K562 (cell line): ENCODE measurements at regions of chr10 and their contacts with region 1.

Region 1: GRCh38 chr10:13219685-13220670 is 14.2 kb downstream of the UCMA start:
- DNase-seq: peak; percentile 44 to 76 (median 63)
- ATAC-seq: peak; percentile 96
- H3K4me3 ChIP-seq: no peak overlapping the region
- H3K27ac ChIP-seq: no peak overlapping the region
- H3K4me1 ChIP-seq: no peaks in the 10 kb centered on the region; a peak in 2 of 5 replicates
- H3K27me3 ChIP-seq: no peaks in the 10 kb centered on the region
- CTCF ChIP-seq: peak; percentile 66 to 75 (median 70)
- EP300 ChIP-seq: no peak
- POLR2A ChIP-seq: no peak
- RAD21 ChIP-seq: peak; percentile 49 to 75

Region 2: DNA sequence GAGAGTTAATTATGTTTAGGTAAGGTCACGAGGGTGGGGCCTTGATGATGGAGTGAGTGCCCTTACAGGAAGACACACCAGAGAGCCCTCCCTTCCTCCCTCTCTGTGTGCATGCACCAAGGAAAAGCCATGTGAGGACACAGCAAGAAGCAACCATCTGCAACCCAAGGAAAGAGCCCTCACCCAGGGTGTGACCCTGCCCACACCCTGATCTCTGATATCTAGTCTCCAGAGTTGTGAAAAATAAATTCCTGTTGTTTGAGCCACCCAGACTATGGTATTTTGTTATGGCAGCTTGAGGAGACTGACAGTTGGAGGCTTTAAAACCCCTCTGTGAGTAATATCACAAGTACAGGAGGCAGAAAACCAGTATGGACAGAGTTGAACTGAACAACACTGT is 73.6 kb before region 1 on chr10:
- CTCF ChIA-PET with region 1: no interaction called
- POLR2A ChIA-PET with region 1: no interaction called
- in situ Hi-C with region 1: no loop called
- intact Hi-C with region 1: no loop called
- DNase-seq: no peak
- ATAC-seq: peak; percentile 42; the same call in 2 of the 3 replicates
- H3K4me3 ChIP-seq: no peak overlapping the region
- H3K27ac ChIP-seq: no peak overlapping the region
- H3K4me1 ChIP-seq: peaks cover 0 to 2% of the 10 kb centered on the region in 2 experiments; a peak in 3 of 5 replicates
- H3K27me3 ChIP-seq: peaks cover 0 to 2% of the 10 kb centered on the region in 2 experiments; a peak in 1 of 5 replicates
- CTCF ChIP-seq: no peak
- EP300 ChIP-seq: no peak
- POLR2A ChIP-seq: no peak
- RAD21 ChIP-seq: no peak

Region 3: DNA sequence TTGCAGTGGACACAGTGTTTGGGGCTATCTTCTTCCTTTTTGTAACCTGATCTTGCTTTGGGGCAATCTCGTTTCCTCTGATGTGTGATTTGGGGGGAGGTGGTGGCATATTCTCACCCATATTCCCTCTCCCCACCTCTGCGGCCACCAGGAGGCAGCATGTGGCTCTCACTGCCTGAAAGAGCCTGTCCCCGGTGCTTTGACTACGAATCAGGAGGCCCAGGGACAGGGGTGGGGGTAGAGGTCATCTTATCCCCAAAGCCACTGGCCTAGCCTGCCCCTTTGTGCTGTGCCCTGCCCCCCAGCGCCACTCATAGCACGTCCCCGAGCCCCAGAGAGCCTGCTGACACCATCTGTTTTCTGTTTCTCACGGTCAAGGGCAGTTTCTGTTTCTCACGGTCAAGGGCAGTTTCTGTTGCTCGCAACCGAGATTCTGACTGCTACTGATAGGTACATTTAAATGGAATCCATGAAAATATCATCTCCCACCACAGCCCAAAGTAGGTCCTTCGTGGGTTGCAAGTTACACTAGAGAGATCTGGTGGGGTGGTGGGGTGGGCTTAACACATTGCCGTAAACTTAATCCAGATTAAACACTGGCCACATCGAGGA is 51.7 kb after region 1 on chr10:
- CTCF ChIA-PET with region 1: no interaction called
- POLR2A ChIA-PET with region 1: no interaction called
- in situ Hi-C with region 1: no loop called
- intact Hi-C with region 1: loop called (anchors 10 kb)
- DNase-seq: peak; percentile 78 to 89 (median 84)
- ATAC-seq: peak; percentile 98
- H3K4me3 ChIP-seq: no peak overlapping the region
- H3K27ac ChIP-seq: peak overlapping the region; percentile 62
- H3K4me1 ChIP-seq: peaks cover 21 to 24% of the 10 kb centered on the region in 2 experiments; a peak in 4 of 5 replicates
- H3K27me3 ChIP-seq: no peaks in the 10 kb centered on the region
- CTCF ChIP-seq: peak; percentile 77 to 91 (median 78)
- EP300 ChIP-seq: no peak
- POLR2A ChIP-seq: no peak
- RAD21 ChIP-seq: peak; percentile 43 to 78

Region 4: DNA sequence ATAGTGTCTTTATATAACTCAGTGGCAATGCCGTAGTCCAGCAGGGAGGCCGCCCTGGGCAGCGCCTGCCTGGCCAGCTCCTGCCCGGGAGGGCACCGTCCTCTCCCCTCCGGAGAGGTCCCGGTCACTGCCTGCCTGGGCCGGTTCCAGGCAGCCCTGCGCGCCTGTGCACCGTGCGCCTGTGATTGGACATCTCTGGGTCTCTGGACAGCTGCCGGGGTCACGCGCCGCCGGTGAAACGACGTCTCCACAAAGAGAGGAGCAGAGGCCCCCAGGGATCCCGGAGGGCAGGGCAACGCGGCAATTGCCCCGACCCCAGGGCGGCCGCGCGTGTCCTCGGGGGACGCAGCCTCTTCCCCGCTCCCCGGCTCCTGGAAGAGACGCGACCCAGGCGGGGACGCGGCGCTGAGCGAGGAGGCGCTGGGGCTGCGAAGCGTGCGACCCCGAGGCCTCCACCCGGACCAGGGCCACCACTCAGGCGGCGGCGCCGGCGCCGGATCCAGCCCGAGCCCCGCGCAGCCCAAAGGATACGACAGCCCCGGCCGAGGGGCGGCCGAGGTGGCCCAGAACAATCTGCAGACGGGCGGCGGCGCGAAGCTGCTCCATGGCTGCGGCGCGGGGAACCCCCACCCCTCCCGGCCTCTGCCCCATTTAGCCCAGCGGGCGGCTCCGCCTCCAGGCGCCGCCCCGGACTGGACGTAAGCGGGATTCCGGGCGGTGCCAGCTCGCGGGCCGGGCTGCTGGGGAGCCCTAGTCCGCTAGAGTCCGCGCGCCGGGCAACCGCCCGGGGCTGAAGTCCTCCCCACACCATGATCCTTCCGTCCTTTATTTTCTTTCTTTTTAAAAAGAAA is 79.7 kb after region 1 on chr10 and contains the start of gene PHYH:
- CTCF ChIA-PET with region 1: no interaction called
- POLR2A ChIA-PET with region 1: no interaction called
- in situ Hi-C with region 1: loop called (anchors 5 kb)
- intact Hi-C with region 1: loop called (anchors 1 kb)
- DNase-seq: peak; percentile 83 to 90 (median 88)
- ATAC-seq: peak; percentile 89
- H3K4me3 ChIP-seq: peak within 1 kb of the TSS; percentile 58
- H3K27ac ChIP-seq: peak within 1 kb of the TSS; percentile 69
- H3K4me1 ChIP-seq: peaks cover 8 to 32% of the 10 kb centered on the region in 2 experiments; a peak in 3 of 5 replicates
- H3K27me3 ChIP-seq: no peaks in the 10 kb centered on the region
- CTCF ChIP-seq: no peak
- EP300 ChIP-seq: no peak; the same call in 1 of the 2 replicates
- POLR2A ChIP-seq: peak; percentile 69
- RAD21 ChIP-seq: no peak
- polyA plus RNA-seq, gene PHYH: 6.3 to 6.9 TPM

Region 5: DNA sequence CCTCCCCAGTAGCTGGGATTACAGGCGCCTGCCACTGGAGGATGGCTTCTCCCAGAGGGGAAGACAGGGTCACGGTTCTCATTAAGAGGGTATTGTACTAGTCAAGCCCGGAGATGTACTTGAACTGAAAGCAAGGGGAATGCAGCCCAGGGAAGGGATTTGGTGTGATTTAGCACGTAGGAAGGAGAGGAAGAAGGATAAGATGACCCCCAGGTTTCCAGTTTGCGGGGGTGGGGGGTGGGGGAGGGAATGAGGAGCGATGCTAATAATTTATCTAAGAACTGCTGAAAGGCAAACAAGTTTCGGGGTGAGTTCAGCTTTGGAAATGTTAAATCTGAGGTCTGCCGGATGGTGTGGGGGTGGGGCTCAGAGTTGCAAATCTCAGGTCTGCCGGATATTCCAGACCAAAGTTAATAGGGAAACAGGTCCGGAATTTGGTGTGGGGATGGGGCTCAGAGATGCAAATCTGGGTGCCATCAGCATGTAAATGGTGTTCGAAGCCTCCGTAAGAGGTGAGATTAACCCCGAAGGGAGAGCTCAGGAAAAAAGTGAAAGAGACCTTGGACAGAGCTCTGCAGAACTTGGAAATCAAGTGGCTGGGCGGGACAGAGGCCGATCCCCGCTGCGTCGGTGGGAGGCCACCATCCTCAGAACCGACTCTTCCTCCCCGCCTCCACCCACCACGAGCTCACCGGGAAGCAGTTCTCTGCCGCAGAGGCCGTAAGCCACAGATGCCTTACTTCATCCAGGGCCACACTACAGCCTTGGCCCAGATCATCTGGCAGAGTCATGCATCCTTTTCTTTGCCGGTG is 129.7 kb after region 1 on chr10:
- CTCF ChIA-PET with region 1: no interaction called
- POLR2A ChIA-PET with region 1: no interaction called
- in situ Hi-C with region 1: no loop called
- intact Hi-C with region 1: loop called (anchors 2 kb)
- DNase-seq: peak; percentile 27 to 41 (median 32)
- ATAC-seq: peak; percentile 7; the same call in 2 of the 3 replicates
- H3K4me3 ChIP-seq: no peak overlapping the region
- H3K27ac ChIP-seq: no peak overlapping the region
- H3K4me1 ChIP-seq: peaks cover 13 to 17% of the 10 kb centered on the region in 2 experiments
- H3K27me3 ChIP-seq: peaks cover 0 to 6% of the 10 kb centered on the region in 2 experiments; a peak in 3 of 5 replicates
- CTCF ChIP-seq: no peak
- EP300 ChIP-seq: no peak
- POLR2A ChIP-seq: no peak
- RAD21 ChIP-seq: no peak